Posterior vena cava (tissue), 2 donors: ENCODE measurements at regions of chr7 and their contacts with region 1.

Region 1: GRCh38 chr7:25894902-25895791 is 256.9 kb upstream of the NFE2L3 start:
- DNase-seq: peak; percentile 90

Region 2: GRCh38 chr7:25928549-25929330 is 33.6 kb after region 1 on chr7:
- intact Hi-C with region 1: no loop called
- DNase-seq: no peak

Region 3: GRCh38 chr7:25940086-25940906 is 45.1 kb after region 1 on chr7:
- intact Hi-C with region 1: no loop called
- DNase-seq: no peak

Region 4: GRCh38 chr7:26061688-26062150 is 166.6 kb after region 1 on chr7:
- intact Hi-C with region 1: loop called in 1 of 2 experiments (anchors 5 kb)
- DNase-seq: no peak

Region 5: GRCh38 chr7:26365077-26365900 is 470.1 kb after region 1 on chr7:
- intact Hi-C with region 1: loop called (anchors 2 to 5 kb)
- DNase-seq: no peak

Region 6: DNA sequence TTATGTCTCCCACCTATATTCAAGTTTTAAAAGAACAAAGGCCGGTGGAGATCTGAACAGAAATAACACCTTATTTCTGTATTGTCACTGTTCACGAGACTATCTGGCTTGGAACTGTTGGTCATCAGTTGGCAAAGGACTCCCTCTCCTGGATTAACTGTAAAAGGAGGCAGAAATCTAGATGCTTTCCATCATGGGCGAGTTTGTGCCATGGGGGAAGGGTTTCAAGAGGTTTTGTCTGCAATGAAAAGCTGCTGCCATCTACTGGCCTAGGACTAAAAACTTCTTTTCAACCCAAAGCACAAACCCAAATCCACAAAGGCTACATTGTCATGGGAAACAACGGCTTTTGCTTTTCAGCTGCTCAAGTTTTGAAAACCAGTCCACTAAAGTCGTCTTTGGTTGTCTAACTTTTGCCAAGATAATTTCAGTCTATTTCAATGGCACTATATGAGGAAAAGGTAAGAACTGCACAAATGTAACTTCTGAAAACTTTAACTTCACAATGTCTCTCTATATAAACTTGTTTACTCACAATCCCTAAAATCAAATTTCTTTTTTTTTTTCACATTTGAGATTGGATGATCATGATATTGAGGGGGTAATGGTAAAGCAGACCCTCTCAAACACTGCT is 772.5 kb after region 1 on chr7:
- intact Hi-C with region 1: loop called in 1 of 2 experiments (anchors 10 kb)
- DNase-seq: no peak